Activated CD4-positive, alpha-beta T cell treated with anti-CD3 and anti-CD28 coated beads for 36 hours (primary cell): ENCODE measurements at regions of chr6 and their contacts with region 1.

Region 1: GRCh38 chr6:16684896-16685554 is 76.2 kb downstream of the ATXN1 start:
- DNase-seq: peak; percentile 95
- ATAC-seq: peak; percentile 76
- H3K4me3 Mint-ChIP-seq: peak overlapping the region; percentile 43
- H3K27ac Mint-ChIP-seq: peak overlapping the region; percentile 78
- H3K4me1 Mint-ChIP-seq: peaks cover 86% of the 10 kb centered on the region
- H3K27me3 Mint-ChIP-seq: no peaks in the 10 kb centered on the region

Region 2: DNA sequence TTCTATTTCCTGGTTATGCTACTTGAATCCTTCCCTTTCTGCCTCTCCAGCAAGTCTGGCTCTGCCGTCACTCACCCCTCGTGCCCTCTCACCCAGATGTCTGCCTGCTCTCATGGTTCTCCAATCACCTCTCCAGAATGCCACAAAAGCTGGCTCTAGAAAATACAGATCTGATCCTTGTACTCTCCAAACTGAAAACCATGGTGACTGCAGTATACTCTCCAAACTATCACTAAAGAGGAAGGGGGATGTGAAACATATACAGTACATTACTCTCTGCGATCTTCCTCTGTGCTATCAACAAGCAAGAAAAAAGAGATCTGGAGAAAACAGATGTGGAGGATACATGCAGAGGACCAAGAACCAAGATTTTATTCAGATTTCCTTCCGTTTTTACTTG is 14.8 kb before region 1 on chr6:
- CTCF ChIA-PET with region 1: interaction called, 3 read pairs
- POLR2A ChIA-PET with region 1: no interaction called
- intact Hi-C with region 1: loop called (anchors 1 kb)
- DNase-seq: no peak
- ATAC-seq: peak; percentile 38
- H3K4me3 Mint-ChIP-seq: peak overlapping the region; percentile 7
- H3K27ac Mint-ChIP-seq: peak overlapping the region; percentile 87
- H3K4me1 Mint-ChIP-seq: peaks cover 63% of the 10 kb centered on the region
- H3K27me3 Mint-ChIP-seq: no peaks in the 10 kb centered on the region

Region 3: DNA sequence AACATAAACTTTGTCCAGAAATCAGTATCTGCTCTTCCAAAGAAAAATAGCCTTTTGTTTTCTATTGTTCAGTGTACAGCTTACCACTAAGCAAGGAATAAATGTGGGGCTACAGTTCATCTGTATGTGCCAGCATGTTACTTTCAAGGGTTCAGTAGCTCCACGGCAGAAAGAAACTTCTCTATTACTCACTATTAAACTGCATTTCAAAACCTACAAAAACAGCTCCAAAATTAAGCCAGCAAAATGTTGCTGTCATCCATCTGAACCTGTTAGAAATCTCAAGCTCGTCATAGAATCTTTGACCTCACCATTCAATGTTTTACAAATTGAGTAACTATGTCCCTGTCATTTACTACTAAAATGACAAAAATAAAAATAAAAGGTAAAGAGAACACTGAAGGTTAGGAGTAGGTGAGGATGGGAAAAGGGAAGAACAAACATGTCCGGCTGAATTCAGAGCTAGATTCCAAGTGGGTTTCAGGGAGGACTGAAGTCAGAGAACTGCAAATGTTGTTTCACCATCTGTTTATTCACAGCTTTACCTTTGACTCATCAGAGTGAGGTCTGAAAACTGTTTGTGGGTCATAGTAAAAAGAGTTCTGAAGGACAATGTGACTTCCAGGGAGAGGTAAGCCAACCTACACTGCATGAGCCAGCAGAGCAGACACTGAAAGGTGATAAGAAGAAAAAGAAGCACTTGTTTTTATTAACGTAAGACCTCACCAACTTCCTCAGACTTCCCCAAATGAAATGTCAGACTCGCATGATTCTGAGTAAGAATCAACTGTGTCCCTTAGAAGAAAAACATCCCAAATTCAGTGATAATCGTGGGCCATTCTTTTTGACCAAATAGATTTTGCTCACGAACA is 14.2 kb after region 1 on chr6:
- CTCF ChIA-PET with region 1: interaction called, 26 read pairs
- POLR2A ChIA-PET with region 1: interaction called, 16 read pairs
- intact Hi-C with region 1: loop called in 1 of 2 experiments (anchors 1 kb)
- DNase-seq: peak; percentile 45
- ATAC-seq: peak; percentile 63
- H3K4me3 Mint-ChIP-seq: peak overlapping the region; percentile 69
- H3K27ac Mint-ChIP-seq: peak overlapping the region; percentile 95
- H3K4me1 Mint-ChIP-seq: peaks cover 75% of the 10 kb centered on the region
- H3K27me3 Mint-ChIP-seq: no peaks in the 10 kb centered on the region

Region 4: DNA sequence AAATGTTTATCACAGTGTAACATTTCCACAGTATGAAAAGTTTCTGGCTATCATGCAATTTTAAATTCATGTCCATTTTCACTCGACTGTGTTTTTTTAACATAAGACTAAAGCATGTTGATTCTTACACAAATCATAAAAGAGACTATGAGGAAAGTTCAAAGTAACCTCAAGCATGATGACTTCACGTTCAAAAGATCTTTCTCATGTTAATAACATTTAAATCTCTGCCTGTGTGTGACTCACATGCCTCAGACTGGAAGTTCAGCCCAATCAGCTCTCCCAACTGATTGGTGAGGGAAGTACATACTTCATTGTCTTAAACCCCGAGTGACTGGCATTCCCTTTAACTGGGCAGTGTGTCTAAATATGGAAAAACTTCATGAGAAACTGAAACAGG is 38.8 kb after region 1 on chr6:
- CTCF ChIA-PET with region 1: no interaction called
- POLR2A ChIA-PET with region 1: no interaction called
- intact Hi-C with region 1: loop called in 1 of 2 experiments (anchors 5 kb)
- DNase-seq: peak; percentile 29
- ATAC-seq: peak; percentile 88
- H3K4me3 Mint-ChIP-seq: no peak overlapping the region
- H3K27ac Mint-ChIP-seq: peak overlapping the region; percentile 17
- H3K4me1 Mint-ChIP-seq: peaks cover 47% of the 10 kb centered on the region
- H3K27me3 Mint-ChIP-seq: no peaks in the 10 kb centered on the region

Region 5: DNA sequence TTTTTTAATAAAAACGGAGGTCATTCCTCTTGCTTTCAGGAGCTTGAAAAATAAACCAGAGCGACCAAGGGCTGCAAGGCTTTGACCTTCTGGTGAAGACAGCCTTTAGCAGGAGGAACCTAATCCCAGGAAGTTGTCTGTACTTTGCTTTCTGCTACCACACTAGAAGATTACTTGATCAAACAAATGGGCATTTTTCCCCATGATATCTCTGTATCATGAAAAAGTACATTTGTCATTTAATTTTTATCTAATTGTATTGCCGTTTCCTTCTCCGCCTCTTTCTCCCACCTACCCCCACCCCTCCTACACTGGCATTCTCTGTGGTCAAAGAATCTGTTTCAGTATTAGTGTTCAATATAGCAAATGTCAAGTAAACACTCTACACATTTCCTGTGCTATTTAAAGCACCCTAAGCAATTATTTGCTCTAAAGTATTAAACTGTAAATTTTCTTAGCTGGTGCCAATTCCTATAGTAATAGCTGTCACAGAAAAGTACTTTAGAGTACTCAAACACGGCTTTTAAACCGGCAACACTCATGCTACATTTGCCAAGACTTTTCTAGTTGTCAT is 46.5 kb after region 1 on chr6:
- CTCF ChIA-PET with region 1: no interaction called
- POLR2A ChIA-PET with region 1: no interaction called
- intact Hi-C with region 1: loop called in 1 of 2 experiments (anchors 1 kb)
- DNase-seq: peak; percentile 57
- ATAC-seq: peak; percentile 67
- H3K4me3 Mint-ChIP-seq: peak overlapping the region; percentile 26
- H3K27ac Mint-ChIP-seq: peak overlapping the region; percentile 65
- H3K4me1 Mint-ChIP-seq: peaks cover 57% of the 10 kb centered on the region
- H3K27me3 Mint-ChIP-seq: no peaks in the 10 kb centered on the region